HepG2 (cell line): ENCODE measurements at regions of chr4 and their contacts with region 1.

Region 1: DNA sequence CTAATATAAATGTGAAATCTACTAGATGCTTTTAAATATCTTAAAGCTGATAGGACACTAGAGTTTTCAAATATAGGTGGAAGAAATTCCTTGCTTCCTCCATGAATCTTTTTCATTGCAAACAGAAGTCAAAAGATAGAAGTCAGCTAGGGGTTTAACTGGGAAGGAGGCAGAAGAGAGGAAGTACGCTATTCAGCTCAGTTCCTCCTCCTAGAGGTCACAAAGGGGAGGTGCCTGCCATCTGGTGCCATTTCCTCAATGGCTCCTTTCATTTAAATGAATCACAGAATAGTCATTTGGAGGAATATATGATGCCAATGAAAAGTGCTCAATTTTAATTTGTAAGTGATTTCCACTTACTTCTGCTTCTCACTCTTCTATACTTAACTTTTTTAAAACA is 8.5 kb downstream of the COL25A1 start:
- DNase-seq: peak; percentile 15
- ATAC-seq: peak; percentile 68
- H3K4me3 ChIP-seq: no peak overlapping the region
- H3K27ac ChIP-seq: no peak overlapping the region
- H3K4me1 ChIP-seq: no peaks in the 10 kb centered on the region
- H3K27me3 ChIP-seq: no peaks in the 10 kb centered on the region; a peak in 1 of 5 replicates
- CTCF ChIP-seq: peak; percentile 37
- EP300 ChIP-seq: no peak
- POLR2A ChIP-seq: no peak
- RAD21 ChIP-seq: no peak

Region 2: GRCh38 chr4:108751321-108751720 is 542.7 kb before region 1 on chr4:
- CTCF ChIA-PET with region 1: no interaction called
- POLR2A ChIA-PET with region 1: no interaction called
- in situ Hi-C with region 1: no loop called
- intact Hi-C with region 1: no loop called
- DNase-seq: no peak
- ATAC-seq: no peak
- H3K4me3 ChIP-seq: no peak overlapping the region
- H3K27ac ChIP-seq: no peak overlapping the region
- H3K4me1 ChIP-seq: no peaks in the 10 kb centered on the region
- H3K27me3 ChIP-seq: no peaks in the 10 kb centered on the region
- CTCF ChIP-seq: no peak
- EP300 ChIP-seq: no peak
- POLR2A ChIP-seq: no peak
- RAD21 ChIP-seq: no peak

Region 3: DNA sequence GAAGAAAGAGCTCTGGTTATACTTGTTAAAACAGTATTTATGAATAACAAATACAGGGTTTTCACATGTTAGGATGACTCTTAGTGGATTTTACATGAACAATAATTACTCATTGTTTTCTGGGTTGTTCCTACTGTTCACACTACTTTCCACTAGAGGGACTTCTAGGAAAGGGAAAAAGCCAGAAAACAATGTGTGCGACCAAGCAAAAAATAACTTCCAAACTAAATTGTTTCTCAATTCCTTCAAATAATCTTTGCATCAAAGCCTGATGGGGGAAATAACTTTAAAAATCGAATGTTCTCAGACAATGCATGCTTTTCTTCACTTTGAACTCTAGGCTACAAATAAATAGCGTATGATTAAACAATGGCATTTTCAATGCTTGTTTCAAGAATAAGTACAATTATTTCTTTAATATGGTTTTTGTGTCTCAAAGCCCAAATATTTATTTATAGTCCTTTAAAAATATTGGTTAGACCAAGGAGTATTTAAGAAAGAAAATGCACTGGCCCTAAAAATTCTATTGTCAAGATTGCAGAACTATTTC is 459.1 kb before region 1 on chr4:
- CTCF ChIA-PET with region 1: no interaction called
- POLR2A ChIA-PET with region 1: no interaction called
- in situ Hi-C with region 1: no loop called
- intact Hi-C with region 1: loop called (anchors 1 kb)
- DNase-seq: peak; percentile 23
- ATAC-seq: peak; percentile 74
- H3K4me3 ChIP-seq: no peak overlapping the region
- H3K27ac ChIP-seq: no peak overlapping the region
- H3K4me1 ChIP-seq: no peaks in the 10 kb centered on the region
- H3K27me3 ChIP-seq: no peaks in the 10 kb centered on the region
- CTCF ChIP-seq: peak; percentile 58
- EP300 ChIP-seq: no peak
- POLR2A ChIP-seq: no peak
- RAD21 ChIP-seq: no peak

Region 4: DNA sequence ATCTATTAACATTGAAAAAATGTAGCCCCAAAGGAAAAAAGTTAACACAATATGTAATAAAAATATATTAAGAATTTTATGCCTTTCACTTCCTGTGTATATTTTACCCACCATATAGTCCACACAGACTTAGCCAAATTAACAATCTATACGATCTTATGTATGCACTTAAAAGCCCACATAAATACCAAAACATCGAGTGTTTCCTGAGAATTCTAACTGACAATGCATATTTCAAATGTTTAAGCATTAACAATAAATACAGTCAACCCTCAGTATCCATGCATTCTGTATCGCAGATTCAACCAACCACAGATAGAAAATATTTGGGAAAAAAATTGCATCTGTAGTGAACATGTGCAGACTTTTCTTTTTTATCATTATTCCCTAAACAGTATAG is 218.4 kb before region 1 on chr4:
- CTCF ChIA-PET with region 1: no interaction called
- POLR2A ChIA-PET with region 1: no interaction called
- in situ Hi-C with region 1: no loop called
- intact Hi-C with region 1: loop called (anchors 1 kb)
- DNase-seq: no peak
- ATAC-seq: no peak
- H3K4me3 ChIP-seq: no peak overlapping the region
- H3K27ac ChIP-seq: no peak overlapping the region
- H3K4me1 ChIP-seq: no peaks in the 10 kb centered on the region
- H3K27me3 ChIP-seq: no peaks in the 10 kb centered on the region; a peak in 1 of 5 replicates
- CTCF ChIP-seq: no peak
- EP300 ChIP-seq: no peak
- POLR2A ChIP-seq: no peak
- RAD21 ChIP-seq: no peak

Region 5: GRCh38 chr4:109433205-109434006 is 139.4 kb after region 1 on chr4 and contains the start of gene SEC24B:
- CTCF ChIA-PET with region 1: no interaction called
- POLR2A ChIA-PET with region 1: no interaction called
- in situ Hi-C with region 1: no loop called
- intact Hi-C with region 1: no loop called
- DNase-seq: peak; percentile 73
- ATAC-seq: peak; percentile 92
- H3K4me3 ChIP-seq: peak within 1 kb of the TSS; percentile 81 to 93 (median 86)
- H3K27ac ChIP-seq: peak within 1 kb of the TSS; percentile 81
- H3K4me1 ChIP-seq: peaks cover 43% of the 10 kb centered on the region
- H3K27me3 ChIP-seq: no peaks in the 10 kb centered on the region; a peak in 1 of 5 replicates
- CTCF ChIP-seq: peak; percentile 73
- EP300 ChIP-seq: no peak
- POLR2A ChIP-seq: peak; percentile 69 to 77
- RAD21 ChIP-seq: peak; percentile 86
- total RNA-seq, gene SEC24B: 14.6 and 22.9 TPM in 2 replicates